ENCODE measurements at regions of chr14 and their contacts with region 1.

Region 1: GRCh38 chr14:91418387-91419043 is 895 bp upstream of the CCDC88C start:
- DNase-seq: peak; percentile 29 to 73 (median 56)
- H3K4me3 ChIP-seq: peak overlapping the region; percentile 44
- H3K27ac ChIP-seq: no peak overlapping the region
- H3K4me1 ChIP-seq: peaks cover 5% of the 10 kb centered on the region
- H3K27me3 ChIP-seq: no peaks in the 10 kb centered on the region
- CTCF ChIP-seq: peak; percentile 42 to 85 (median 84)
- EP300 ChIP-seq: no peak
- POLR2A ChIP-seq: no peak

Region 2: DNA sequence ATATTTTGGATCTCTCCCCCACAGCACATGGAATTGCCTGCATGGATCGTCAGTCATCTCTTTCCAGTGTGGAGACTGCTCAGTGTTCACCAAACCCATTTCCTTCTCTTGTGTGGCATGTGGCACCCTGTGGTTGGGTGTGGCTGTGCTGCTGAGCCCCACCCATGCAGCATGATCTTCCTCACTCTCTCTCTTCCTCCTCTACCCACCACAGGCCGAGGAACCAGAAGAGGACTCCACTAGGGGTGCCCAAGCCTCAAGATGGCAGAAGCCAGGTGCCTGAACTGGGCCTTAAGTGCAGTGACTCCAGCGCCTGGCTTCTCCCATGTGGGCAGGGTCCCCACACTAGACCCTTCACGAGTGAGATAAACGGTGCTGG is 107.2 kb before region 1 on chr14:
- intact Hi-C with region 1: no loop called
- DNase-seq: no peak
- H3K4me3 ChIP-seq: no peak overlapping the region
- H3K27ac ChIP-seq: no peak overlapping the region
- H3K4me1 ChIP-seq: no peaks in the 10 kb centered on the region
- H3K27me3 ChIP-seq: no peaks in the 10 kb centered on the region
- CTCF ChIP-seq: no peak
- EP300 ChIP-seq: no peak
- POLR2A ChIP-seq: no peak

Region 3: GRCh38 chr14:91323671-91324605 is 94.6 kb before region 1 on chr14:
- intact Hi-C with region 1: loop called (anchors 1 to 10 kb)
- DNase-seq: peak; percentile 79 to 92 (median 88)
- H3K4me3 ChIP-seq: peak overlapping the region; percentile 25
- H3K27ac ChIP-seq: peak overlapping the region; percentile 2 to 19
- H3K4me1 ChIP-seq: peaks cover 3% of the 10 kb centered on the region
- H3K27me3 ChIP-seq: no peaks in the 10 kb centered on the region
- CTCF ChIP-seq: peak; percentile 77 to 83 (median 80)
- EP300 ChIP-seq: no peak
- POLR2A ChIP-seq: no peak

Region 4: DNA sequence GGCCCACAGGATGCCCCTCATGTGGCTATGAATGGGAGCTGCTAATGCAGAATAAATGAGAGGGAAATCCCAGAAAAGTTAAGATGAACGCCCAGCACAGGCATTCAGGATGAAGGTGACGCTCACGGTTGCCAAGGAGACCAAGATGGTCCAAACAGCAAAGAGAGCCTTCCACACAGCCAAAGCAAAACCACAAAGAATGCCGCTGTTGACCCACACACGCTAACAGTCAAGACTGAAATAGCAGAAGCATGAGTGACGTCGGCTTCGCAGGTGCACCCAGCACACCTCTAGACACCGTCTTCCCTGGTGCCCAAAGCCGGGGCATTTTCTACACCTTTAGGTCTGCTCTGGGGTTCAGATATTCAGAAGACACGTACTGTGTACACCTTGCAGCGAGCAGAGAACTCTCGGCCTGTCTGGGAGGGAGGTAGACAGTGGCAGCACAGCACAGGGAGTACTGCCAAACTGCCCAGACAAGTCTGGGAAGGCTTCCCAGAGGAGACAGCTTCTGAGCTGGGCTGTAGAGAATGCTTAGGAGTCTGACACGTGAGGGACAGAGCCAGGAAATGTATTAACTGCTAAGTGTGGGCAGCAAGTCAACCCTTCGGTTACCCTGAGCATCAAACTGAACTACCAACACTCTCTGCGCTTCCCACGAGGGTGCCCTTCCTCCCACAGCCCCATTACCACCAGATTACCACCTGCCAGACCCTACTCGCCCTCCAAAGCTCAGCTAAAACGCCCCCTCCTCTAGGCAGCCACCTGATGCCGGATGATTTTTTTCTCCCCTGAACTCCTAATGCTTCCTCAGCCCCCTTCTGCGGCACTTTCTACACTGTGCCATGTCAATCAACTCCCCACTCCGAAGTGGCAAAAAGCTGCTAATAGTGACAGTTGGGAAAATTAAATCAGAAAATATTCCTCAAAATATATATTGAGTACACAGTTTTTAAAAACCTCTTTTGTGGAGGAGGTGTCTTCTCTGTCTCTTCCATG is 51.0 kb before region 1 on chr14:
- intact Hi-C with region 1: no loop called
- DNase-seq: no peak
- H3K4me3 ChIP-seq: no peak overlapping the region
- H3K27ac ChIP-seq: no peak overlapping the region
- H3K4me1 ChIP-seq: no peaks in the 10 kb centered on the region
- H3K27me3 ChIP-seq: no peaks in the 10 kb centered on the region
- CTCF ChIP-seq: no peak
- EP300 ChIP-seq: no peak
- POLR2A ChIP-seq: no peak

Measured in ovary (tissue), 10 donors.